Transverse colon (tissue), 4 donors: ENCODE measurements at regions of chr11 and their contacts with region 1.

Region 1: DNA sequence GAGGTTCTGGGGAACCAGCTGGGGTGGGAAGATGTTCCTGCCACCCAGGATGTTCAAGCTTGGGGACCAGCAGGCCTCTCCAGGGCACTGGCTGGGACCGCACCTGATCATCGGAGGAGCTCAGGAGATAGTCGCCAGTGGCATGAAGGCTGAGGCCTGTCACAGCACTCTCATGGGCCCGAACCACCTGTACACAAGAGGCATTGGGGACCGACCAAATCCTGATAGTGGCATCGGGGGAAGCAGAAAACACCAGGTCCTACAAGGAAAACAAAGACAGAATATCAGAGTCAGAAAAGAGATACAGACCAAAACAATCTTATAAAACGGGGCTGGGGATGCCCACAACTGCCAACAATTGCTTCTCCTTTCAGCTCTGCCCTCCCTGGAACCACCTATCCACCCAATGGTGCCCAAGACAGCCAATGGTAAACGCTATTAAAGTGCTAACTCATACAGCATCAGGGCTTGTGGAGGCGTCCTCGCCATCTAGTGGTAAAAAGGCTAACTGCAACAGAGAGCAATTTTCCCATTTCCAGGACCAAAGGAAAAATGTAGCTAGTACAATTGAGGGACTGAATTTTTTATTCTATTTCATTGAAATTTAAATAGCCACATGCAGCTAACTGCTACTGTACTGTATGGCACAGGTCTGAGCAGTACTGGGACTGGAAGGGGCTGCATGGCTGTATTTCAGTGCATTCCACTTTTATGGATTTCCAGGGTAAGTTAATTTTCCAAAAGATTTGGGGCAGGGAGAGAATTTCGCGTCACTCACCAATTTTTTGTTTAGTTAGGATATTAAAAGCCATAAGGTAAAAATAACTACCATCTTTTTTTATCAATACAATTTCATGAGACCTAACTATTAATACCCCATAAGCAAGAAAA is 7.1 kb downstream of the PRPF19 start:
- DNase-seq: no peak
- H3K4me3 ChIP-seq: no peak overlapping the region
- H3K27ac ChIP-seq: no peak overlapping the region
- H3K4me1 ChIP-seq: peaks cover 0 to 10% (median 4%) of the 10 kb centered on the region in 4 donors
- H3K27me3 ChIP-seq: no peaks in the 10 kb centered on the region
- CTCF ChIP-seq: peak; percentile 89 to 97 (median 94)
- EP300 ChIP-seq: no peak
- POLR2A ChIP-seq: no peak

Region 2: DNA sequence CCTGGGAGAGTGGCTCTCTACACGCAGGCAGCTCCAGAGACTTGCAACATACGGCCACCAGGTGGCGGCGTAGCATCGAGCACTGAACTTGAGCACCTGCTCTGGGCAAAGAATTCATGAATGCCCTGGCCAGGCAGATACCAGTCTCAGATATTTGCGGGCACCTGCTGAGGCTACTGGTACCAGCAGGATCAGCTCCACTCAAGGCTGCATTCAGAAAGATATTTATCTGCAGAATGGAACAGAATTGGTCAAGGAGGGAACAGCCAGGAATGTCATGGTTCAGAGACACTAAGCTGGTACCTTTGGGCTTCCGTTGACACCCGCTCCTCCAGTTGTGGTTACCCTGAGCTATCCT is 68.2 kb before region 1 on chr11:
- in situ Hi-C with region 1: loop called (anchors 5 to 10 kb)
- intact Hi-C with region 1: loop called (anchors 5 kb)
- DNase-seq: peak; percentile 86
- H3K4me3 ChIP-seq: no peak overlapping the region
- H3K27ac ChIP-seq: no peak overlapping the region
- H3K4me1 ChIP-seq: peaks cover 0 to 11% (median 6%) of the 10 kb centered on the region in 4 donors
- H3K27me3 ChIP-seq: peaks cover 3% of the 10 kb centered on the region
- CTCF ChIP-seq: peak; percentile 89 to 97 (median 92)
- EP300 ChIP-seq: no peak
- POLR2A ChIP-seq: no peak

Region 3: GRCh38 chr11:60951899-60952741 is 52.8 kb after region 1 on chr11 and contains the start of gene SLC15A3:
- in situ Hi-C with region 1: no loop called
- intact Hi-C with region 1: no loop called
- DNase-seq: peak; percentile 72
- H3K4me3 ChIP-seq: peak within 1 kb of the TSS; percentile 35 to 56 (median 44)
- H3K27ac ChIP-seq: peak within 1 kb of the TSS; percentile 80 to 87 (median 85)
- H3K4me1 ChIP-seq: peaks cover 0 to 35% (median 9%) of the 10 kb centered on the region in 4 donors
- H3K27me3 ChIP-seq: no peaks in the 10 kb centered on the region
- CTCF ChIP-seq: no peak
- EP300 ChIP-seq: no peak
- POLR2A ChIP-seq: peak; percentile 45
- total RNA-seq, gene SLC15A3: 8.1 to 18.9 (median 12.6) TPM